IMR-90 (cell line): ENCODE measurements at regions of chr3 and their contacts with region 1.

Region 1: DNA sequence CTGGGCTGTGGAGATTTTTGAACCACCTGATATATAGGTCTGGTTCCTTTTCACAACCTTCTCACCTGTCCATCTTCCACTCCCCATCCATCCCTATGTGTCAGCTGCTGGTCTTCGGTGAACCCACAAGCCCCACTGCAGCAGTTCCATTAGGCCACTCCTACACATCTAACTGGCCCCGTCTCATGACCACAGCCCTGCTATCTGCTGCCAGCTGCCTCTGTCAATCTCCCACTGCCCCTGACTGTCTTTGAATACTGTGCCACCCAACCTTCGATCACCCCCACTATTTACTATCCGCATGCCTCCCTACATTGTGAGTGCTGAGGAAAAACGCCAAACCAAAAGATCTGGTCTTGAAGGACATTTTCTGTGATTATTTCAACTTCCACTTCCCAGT is 795.4 kb downstream of the IGSF11 start:
- DNase-seq: no peak
- ATAC-seq: no peak
- H3K4me3 ChIP-seq: no peak overlapping the region
- H3K27ac ChIP-seq: no peak overlapping the region
- H3K4me1 ChIP-seq: no peaks in the 10 kb centered on the region
- H3K27me3 ChIP-seq: no peaks in the 10 kb centered on the region
- CTCF ChIP-seq: no peak
- POLR2A ChIP-seq: no peak
- RAD21 ChIP-seq: no peak

Region 2: DNA sequence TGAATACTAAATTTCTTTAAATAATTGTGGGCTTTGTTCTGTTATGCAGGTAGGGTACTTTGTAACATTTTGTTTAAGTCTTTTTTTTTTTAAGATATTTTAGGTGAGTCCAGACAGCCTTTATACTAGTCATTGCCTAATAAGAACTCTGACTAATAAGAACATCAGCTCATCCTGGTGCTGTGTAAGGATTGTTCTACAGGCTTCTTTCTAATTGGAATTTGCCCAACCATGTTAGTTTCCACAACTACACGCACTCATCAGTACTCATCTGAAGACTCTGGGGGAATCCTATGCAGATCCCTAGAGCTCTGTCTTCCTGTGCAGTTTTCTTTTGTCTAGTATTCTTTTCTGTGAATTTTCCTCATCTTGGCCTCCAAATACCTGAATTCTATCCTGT is 53.6 kb after region 1 on chr3:
- CTCF ChIA-PET with region 1: no interaction called
- POLR2A ChIA-PET with region 1: no interaction called
- dilution Hi-C with region 1: no loop called
- in situ Hi-C with region 1: no loop called
- intact Hi-C with region 1: loop called (anchors 10 kb)
- DNase-seq: no peak
- ATAC-seq: no peak
- H3K4me3 ChIP-seq: no peak overlapping the region
- H3K27ac ChIP-seq: no peak overlapping the region
- H3K4me1 ChIP-seq: no peaks in the 10 kb centered on the region
- H3K27me3 ChIP-seq: no peaks in the 10 kb centered on the region
- CTCF ChIP-seq: no peak
- POLR2A ChIP-seq: no peak
- RAD21 ChIP-seq: no peak